ENCODE measurements at regions of chr19 and their contacts with region 1.

Region 1: GRCh38 chr19:12796146-12797071 is 5.1 kb downstream of the JUNB start:
- DNase-seq: peak; percentile 94
- H3K4me3 Mint-ChIP-seq: peak overlapping the region; percentile 83
- H3K27ac Mint-ChIP-seq: peak overlapping the region; percentile 90
- H3K4me1 Mint-ChIP-seq: peaks cover 36% of the 10 kb centered on the region
- H3K27me3 Mint-ChIP-seq: no peaks in the 10 kb centered on the region

Region 2: GRCh38 chr19:12757544-12758274 is 38.7 kb before region 1 on chr19:
- intact Hi-C with region 1: loop called (anchors 1 kb)
- DNase-seq: peak; percentile 93
- H3K4me3 Mint-ChIP-seq: peak overlapping the region; percentile 75
- H3K27ac Mint-ChIP-seq: no peak overlapping the region
- H3K4me1 Mint-ChIP-seq: peaks cover 8% of the 10 kb centered on the region
- H3K27me3 Mint-ChIP-seq: peaks cover 8% of the 10 kb centered on the region

Region 3: GRCh38 chr19:12766051-12766521 is 30.3 kb before region 1 on chr19:
- intact Hi-C with region 1: loop called (anchors 1 kb)
- DNase-seq: peak; percentile 96
- H3K4me3 Mint-ChIP-seq: peak overlapping the region; percentile 70
- H3K27ac Mint-ChIP-seq: no peak overlapping the region
- H3K4me1 Mint-ChIP-seq: peaks cover 3% of the 10 kb centered on the region
- H3K27me3 Mint-ChIP-seq: no peaks in the 10 kb centered on the region

Region 4: GRCh38 chr19:12777217-12778016 is 19.0 kb before region 1 on chr19:
- intact Hi-C with region 1: loop called (anchors 1 kb)
- DNase-seq: peak; percentile 96
- H3K4me3 Mint-ChIP-seq: peak overlapping the region; percentile 96
- H3K27ac Mint-ChIP-seq: peak overlapping the region; percentile 92
- H3K4me1 Mint-ChIP-seq: peaks cover 37% of the 10 kb centered on the region
- H3K27me3 Mint-ChIP-seq: no peaks in the 10 kb centered on the region

Measured in activated CD4-positive, alpha-beta T cell treated with anti-CD3 and anti-CD28 coated beads, Interleukin-2, amount 10 ng/mL, durations not matched to agents 24 days and 14 days (primary cell).